HCT116 (cell line): ENCODE measurements at regions of chr1 and their contacts with region 1.

Region 1: GRCh38 chr1:200971955-200972711 is 51.4 kb downstream of the KIF21B start:
- DNase-seq: peak; percentile 8
- ATAC-seq: peak; percentile 71
- H3K4me3 ChIP-seq: no peak overlapping the region
- H3K27ac ChIP-seq: no peak overlapping the region
- H3K4me1 ChIP-seq: peaks cover 0 to 4% of the 10 kb centered on the region in 2 experiments; a peak in 2 of 4 replicates
- H3K27me3 ChIP-seq: no peaks in the 10 kb centered on the region
- CTCF ChIP-seq: peak; percentile 61 to 76 (median 72)
- POLR2A ChIP-seq: no peak
- RAD21 ChIP-seq: peak; percentile 87

Region 2: GRCh38 chr1:200620273-200621131 is 351.6 kb before region 1 on chr1 and contains the start of gene KIF14:
- CTCF ChIA-PET with region 1: interaction called, 16 read pairs
- POLR2A ChIA-PET with region 1: no interaction called
- RAD21 ChIA-PET with region 1: no interaction called
- intact Hi-C with region 1: no loop called
- DNase-seq: peak; percentile 85
- ATAC-seq: peak; percentile 97
- H3K4me3 ChIP-seq: peak within 1 kb of the TSS; percentile 94
- H3K27ac ChIP-seq: peak within 1 kb of the TSS; percentile 60
- H3K4me1 ChIP-seq: peaks cover 0 to 12% of the 10 kb centered on the region in 2 experiments; a peak in 3 of 4 replicates
- H3K27me3 ChIP-seq: no peaks in the 10 kb centered on the region
- CTCF ChIP-seq: no peak
- POLR2A ChIP-seq: peak; percentile 32
- RAD21 ChIP-seq: no peak
- total RNA-seq, gene KIF14: 21.8 TPM

Region 3: DNA sequence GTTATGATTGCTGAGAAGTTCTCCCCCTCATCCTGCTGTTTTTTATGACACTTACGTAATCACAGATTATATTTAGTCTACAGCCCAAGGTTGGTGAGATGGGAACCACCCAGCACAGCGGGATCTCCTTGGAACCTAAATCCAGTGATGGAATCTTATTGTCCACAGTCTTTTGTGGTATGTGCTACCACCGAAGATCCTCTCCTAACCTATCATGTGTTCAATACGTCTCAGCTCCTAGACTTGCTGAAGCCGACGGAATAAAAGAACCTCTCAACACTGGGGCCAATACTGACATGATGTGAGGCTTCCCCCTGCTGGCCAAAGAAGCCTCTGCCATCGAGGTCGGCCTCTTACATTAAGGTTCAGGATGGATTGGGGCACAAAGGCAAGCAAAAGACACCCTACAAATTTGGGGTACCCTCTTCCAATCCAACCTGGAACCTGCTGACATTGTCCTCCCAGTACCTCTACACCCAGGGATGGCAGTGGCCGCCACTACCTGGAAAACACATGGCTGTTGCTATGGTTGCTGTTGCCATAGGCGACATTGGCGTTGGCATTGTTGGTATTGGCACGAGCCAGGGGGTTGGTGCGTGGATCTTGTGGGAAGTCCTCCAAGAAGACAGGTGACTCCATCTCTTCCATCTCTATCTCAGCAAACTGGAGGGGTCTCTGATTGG is 70.8 kb after region 1 on chr1:
- CTCF ChIA-PET with region 1: interaction called, 44 read pairs
- POLR2A ChIA-PET with region 1: interaction called, 3 read pairs
- RAD21 ChIA-PET with region 1: interaction called, 4 to 13 read pairs
- intact Hi-C with region 1: loop called (anchors 1 kb)
- DNase-seq: peak; percentile 65
- ATAC-seq: peak; percentile 96
- H3K4me3 ChIP-seq: no peak overlapping the region
- H3K27ac ChIP-seq: no peak overlapping the region
- H3K4me1 ChIP-seq: peaks cover 0 to 3% of the 10 kb centered on the region in 2 experiments; a peak in 1 of 4 replicates
- H3K27me3 ChIP-seq: no peaks in the 10 kb centered on the region
- CTCF ChIP-seq: peak; percentile 84 to 96 (median 88)
- POLR2A ChIP-seq: no peak
- RAD21 ChIP-seq: peak; percentile 96

Region 4: GRCh38 chr1:201114236-201115131 is 142.4 kb after region 1 on chr1:
- CTCF ChIA-PET with region 1: interaction called, 45 read pairs
- POLR2A ChIA-PET with region 1: interaction called, 7 read pairs
- RAD21 ChIA-PET with region 1: interaction called, 5 to 13 read pairs
- intact Hi-C with region 1: loop called (anchors 1 kb)
- DNase-seq: peak; percentile 89
- ATAC-seq: peak; percentile 93
- H3K4me3 ChIP-seq: peak overlapping the region; percentile 78 to 86
- H3K27ac ChIP-seq: peak overlapping the region; percentile 59; the same call in 1 of the 2 replicates
- H3K4me1 ChIP-seq: peaks cover 6 to 20% of the 10 kb centered on the region in 2 experiments; a peak in 3 of 4 replicates
- H3K27me3 ChIP-seq: no peaks in the 10 kb centered on the region
- CTCF ChIP-seq: peak; percentile 82 to 92 (median 90)
- POLR2A ChIP-seq: peak; percentile 60
- RAD21 ChIP-seq: peak; percentile 96

Region 5: DNA sequence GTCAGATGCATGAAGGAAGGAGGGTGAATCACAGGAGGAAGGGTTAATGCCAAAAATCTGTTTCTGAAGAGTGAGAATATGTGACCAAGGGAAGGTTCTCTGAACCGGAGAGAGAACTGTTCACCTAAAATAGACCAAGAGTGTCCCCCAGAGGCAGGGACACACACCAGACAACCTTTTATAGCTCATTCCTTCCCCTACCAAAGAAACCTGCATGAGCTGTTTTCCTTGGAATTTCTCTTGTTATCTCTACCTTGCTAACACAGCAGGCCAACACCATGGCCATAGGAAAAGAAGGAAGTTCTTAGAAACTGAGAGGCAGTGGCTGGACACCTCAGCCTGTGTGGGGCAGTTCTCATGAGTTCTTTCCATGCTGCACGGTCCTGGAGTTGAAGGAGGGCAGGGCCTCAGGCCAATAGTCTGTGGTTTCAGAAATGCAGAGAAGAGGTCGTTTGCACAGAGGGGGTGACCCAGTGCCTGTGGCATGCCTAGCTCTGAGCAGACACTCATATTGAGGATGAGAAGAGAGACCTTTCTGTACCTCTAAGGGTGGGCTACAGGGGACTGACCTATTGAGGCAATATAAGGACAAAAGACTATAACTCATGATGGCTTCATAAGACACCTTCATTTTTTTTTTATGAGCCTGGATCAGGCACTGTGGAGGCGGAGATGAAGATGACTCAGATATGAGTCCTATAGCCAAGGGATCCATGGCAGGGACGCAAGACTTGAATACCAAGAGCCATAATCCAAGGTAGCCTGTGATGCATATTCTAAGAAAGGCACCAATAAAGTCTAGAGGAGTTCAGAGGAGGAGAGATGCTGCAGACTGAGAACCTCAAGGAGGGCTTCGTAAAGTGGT is 257.9 kb after region 1 on chr1:
- CTCF ChIA-PET with region 1: interaction called, 10 read pairs
- POLR2A ChIA-PET with region 1: no interaction called
- RAD21 ChIA-PET with region 1: interaction called in 1 of 2 experiments, 3 read pairs
- intact Hi-C with region 1: loop called (anchors 10 kb)
- DNase-seq: peak; percentile 15
- ATAC-seq: peak; percentile 87
- H3K4me3 ChIP-seq: no peak overlapping the region
- H3K27ac ChIP-seq: no peak overlapping the region
- H3K4me1 ChIP-seq: peaks cover 0 to 18% of the 10 kb centered on the region in 2 experiments; a peak in 2 of 4 replicates
- H3K27me3 ChIP-seq: no peaks in the 10 kb centered on the region
- CTCF ChIP-seq: peak; percentile 8 to 47 (median 41); a peak in 4 of 6 replicates
- POLR2A ChIP-seq: no peak
- RAD21 ChIP-seq: peak; percentile 60